Activated CD4-positive, alpha-beta T cell treated with anti-CD3 and anti-CD28 coated beads, Interleukin-2, amount 10 ng/mL, durations not matched to agents 24 days and 14 days (primary cell): ENCODE measurements at regions of chr6 and their contacts with region 1.

Region 1: GRCh38 chr6:57147955-57148858 is 23.9 kb upstream of the BAG2 start:
- DNase-seq: no peak
- H3K4me3 Mint-ChIP-seq: peak overlapping the region; percentile 51
- H3K27ac Mint-ChIP-seq: peak overlapping the region; percentile 88
- H3K4me1 Mint-ChIP-seq: peaks cover 16% of the 10 kb centered on the region
- H3K27me3 Mint-ChIP-seq: no peaks in the 10 kb centered on the region

Region 2: DNA sequence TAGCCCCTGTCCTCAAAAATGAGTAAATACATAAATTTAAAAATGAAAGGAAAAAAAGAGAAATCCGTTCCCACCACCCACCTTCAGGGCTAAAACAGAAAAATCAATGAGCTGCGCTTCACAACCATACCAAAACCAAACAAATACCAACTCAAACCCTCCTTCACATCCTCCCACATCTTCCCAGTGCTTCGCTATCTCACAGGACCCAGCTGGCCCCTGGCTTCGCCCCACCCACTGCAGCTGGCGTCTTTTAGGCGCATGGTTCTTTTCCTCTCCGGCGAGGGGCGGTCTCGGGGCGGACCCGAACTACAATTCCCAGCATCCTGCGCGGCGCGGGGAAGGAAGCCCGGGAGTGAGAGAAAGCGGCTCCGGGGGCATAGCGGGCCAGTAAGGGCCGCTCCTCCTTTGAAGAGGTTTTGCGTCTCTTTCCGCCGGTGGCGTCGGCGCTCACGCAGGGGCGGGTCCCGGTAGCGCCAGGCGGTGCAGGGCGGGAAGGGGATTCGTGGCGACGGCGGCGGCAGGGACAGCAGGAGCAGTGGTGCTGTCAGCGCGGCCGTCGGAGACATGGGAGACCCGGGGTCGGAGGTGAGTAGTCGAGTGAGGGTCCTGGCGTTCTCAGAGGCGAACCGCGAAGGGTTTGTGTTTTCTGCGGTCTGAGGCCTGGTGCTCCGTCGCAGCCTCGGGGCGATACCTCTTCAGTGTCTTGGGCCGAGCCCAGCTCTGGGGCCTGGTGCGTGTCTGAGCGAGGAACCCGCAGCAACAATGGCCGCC is 58.3 kb before region 1 on chr6 and contains the start of gene ZNF451:
- intact Hi-C with region 1: loop called (anchors 1 kb)
- DNase-seq: peak; percentile 99
- H3K4me3 Mint-ChIP-seq: peak within 1 kb of the TSS; percentile 70
- H3K27ac Mint-ChIP-seq: peak within 1 kb of the TSS; percentile 70
- H3K4me1 Mint-ChIP-seq: peaks cover 27% of the 10 kb centered on the region
- H3K27me3 Mint-ChIP-seq: no peaks in the 10 kb centered on the region
- total RNA-seq, gene ZNF451: 58.1 and 61.2 TPM in 2 replicates

Region 3: DNA sequence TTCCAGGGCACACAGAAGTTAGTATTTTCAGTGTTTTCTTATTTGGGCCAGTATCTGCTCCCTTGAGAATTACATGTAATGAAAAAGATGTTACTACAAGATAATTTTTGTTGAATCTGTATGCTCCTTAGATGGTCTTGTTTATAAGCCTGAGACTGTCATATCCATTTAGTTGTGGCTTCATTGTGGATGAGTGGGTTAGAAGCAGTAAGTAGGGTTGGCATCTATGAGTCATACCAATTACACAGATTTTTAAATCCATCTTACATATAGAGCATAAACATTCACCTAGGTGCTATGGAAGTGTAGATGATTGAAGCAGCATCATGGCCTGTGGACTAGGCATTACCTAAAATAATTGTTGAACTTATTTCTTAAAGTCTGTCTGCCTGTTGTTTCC is 10.5 kb after region 1 on chr6:
- intact Hi-C with region 1: loop called (anchors 1 kb)
- DNase-seq: no peak
- H3K4me3 Mint-ChIP-seq: no peak overlapping the region
- H3K27ac Mint-ChIP-seq: peak overlapping the region; percentile 51
- H3K4me1 Mint-ChIP-seq: peaks cover 3% of the 10 kb centered on the region
- H3K27me3 Mint-ChIP-seq: no peaks in the 10 kb centered on the region